ENCODE measurements at regions of chr18 and their contacts with region 1.

Region 1: GRCh38 chr18:3411854-3412268 is 38.1 kb upstream of the TGIF1 start:
- DNase-seq: no peak
- H3K4me3 Mint-ChIP-seq: peak overlapping the region; percentile 13
- H3K27ac Mint-ChIP-seq: no peak overlapping the region
- H3K4me1 Mint-ChIP-seq: peaks cover 13% of the 10 kb centered on the region
- H3K27me3 Mint-ChIP-seq: peaks cover 3% of the 10 kb centered on the region

Region 2: GRCh38 chr18:3388982-3389381 is 22.9 kb before region 1 on chr18:
- intact Hi-C with region 1: no loop called
- DNase-seq: no peak
- H3K4me3 Mint-ChIP-seq: no peak overlapping the region
- H3K27ac Mint-ChIP-seq: no peak overlapping the region
- H3K4me1 Mint-ChIP-seq: no peaks in the 10 kb centered on the region
- H3K27me3 Mint-ChIP-seq: no peaks in the 10 kb centered on the region

Region 3: GRCh38 chr18:3472681-3473544 is 61.1 kb after region 1 on chr18:
- intact Hi-C with region 1: loop called (anchors 2 kb)
- DNase-seq: no peak
- H3K4me3 Mint-ChIP-seq: no peak overlapping the region
- H3K27ac Mint-ChIP-seq: no peak overlapping the region
- H3K4me1 Mint-ChIP-seq: peaks cover 10% of the 10 kb centered on the region
- H3K27me3 Mint-ChIP-seq: no peaks in the 10 kb centered on the region